PC-9 (cell line): ENCODE measurements at regions of chr2 and their contacts with region 1.

Region 1: DNA sequence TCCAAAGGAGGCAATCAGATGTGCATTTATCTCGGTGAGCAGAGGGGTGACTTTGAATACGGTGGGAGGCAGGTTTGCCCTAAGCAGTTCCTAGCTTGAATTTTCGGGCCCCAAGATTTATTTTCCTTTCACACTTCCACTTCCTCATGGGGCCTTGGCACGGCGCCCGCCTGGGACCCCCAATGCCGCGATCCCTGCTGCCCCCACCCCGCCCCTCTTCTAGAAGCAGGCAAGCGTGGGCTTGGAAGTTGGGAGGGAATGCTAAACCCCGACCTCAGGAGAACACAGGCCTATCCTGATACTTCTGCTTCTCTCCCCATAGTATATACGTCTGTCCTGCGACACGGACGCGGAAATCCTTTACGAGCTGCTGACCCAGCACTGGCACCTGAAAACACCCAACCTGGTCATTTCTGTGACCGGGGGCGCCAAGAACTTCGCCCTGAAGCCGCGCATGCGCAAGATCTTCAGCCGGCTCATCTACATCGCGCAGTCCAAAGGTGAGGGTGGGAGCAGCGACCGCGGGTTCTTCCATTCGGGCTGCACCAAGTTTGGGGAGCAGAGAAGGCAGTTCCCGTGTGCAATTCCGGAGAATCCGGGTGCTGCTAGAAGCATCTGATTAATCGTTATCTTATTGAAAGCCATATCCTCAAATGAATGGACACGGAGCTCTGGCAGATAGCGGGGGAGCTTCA is 21.6 kb downstream of the TRPM8 start:
- DNase-seq: no peak
- H3K4me3 ChIP-seq: no peak overlapping the region
- H3K27ac ChIP-seq: no peak overlapping the region
- H3K4me1 ChIP-seq: peaks cover 22% of the 10 kb centered on the region; the same call in 1 of the 2 replicates
- H3K27me3 ChIP-seq: no peaks in the 10 kb centered on the region
- CTCF ChIP-seq: no peak

Region 2: DNA sequence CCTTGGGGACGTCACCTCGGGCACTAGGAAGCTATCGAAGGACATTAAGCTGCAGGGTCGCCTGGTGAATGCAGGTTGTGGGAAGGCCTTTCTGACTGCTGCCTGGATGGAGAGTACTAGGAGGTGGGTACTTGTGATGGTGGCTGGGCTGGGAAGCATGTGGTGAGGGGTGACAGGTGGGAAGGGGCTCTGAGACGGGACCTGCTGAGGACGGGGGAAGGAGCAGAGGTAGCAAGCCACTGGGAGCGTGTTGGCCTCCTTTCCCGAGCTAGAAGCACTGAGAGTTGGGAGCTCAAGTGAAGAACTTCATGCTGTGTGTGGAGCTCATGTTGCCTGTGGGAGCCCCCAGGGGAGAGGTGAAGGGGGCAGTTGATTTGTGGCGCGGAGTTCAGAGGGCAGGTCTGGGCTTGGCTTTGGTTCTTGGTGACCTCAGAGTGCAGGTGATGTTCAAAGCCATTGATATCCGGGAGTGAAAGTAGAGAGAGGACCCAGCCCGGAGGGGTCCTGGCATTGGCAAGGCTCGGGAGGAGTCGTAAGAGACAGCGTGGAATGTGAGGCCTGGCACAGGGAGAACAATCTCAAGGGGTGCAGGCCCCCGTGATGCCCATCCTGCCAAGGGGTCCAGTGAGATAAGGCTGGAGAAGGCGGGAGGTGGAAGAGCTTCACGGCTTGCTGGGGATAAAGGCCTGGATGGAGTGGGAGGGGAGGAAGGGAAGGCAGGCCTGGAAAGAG is 147.5 kb before region 1 on chr2:
- CTCF ChIA-PET with region 1: no interaction called
- POLR2A ChIA-PET with region 1: interaction called, 14 read pairs
- intact Hi-C with region 1: no loop called
- DNase-seq: no peak
- H3K4me3 ChIP-seq: no peak overlapping the region
- H3K27ac ChIP-seq: no peak overlapping the region
- H3K4me1 ChIP-seq: no peaks in the 10 kb centered on the region
- H3K27me3 ChIP-seq: no peaks in the 10 kb centered on the region
- CTCF ChIP-seq: no peak

Region 3: GRCh38 chr2:234029150-234029733 is 90.4 kb after region 1 on chr2:
- CTCF ChIA-PET with region 1: no interaction called
- POLR2A ChIA-PET with region 1: interaction called, 12 read pairs
- intact Hi-C with region 1: no loop called
- DNase-seq: no peak
- H3K4me3 ChIP-seq: no peak overlapping the region
- H3K27ac ChIP-seq: no peak overlapping the region
- H3K4me1 ChIP-seq: no peaks in the 10 kb centered on the region
- H3K27me3 ChIP-seq: no peaks in the 10 kb centered on the region
- CTCF ChIP-seq: no peak